ENCODE measurements at regions of chr1 and their contacts with region 1.

Region 1: GRCh38 chr1:211654838-211655787 is 20.3 kb downstream of the NEK2 start:
- DNase-seq: peak; percentile 86 to 94 (median 88)
- ATAC-seq: peak; percentile 98
- H3K4me3 ChIP-seq: no peak overlapping the region
- H3K27ac ChIP-seq: no peak overlapping the region
- H3K4me1 ChIP-seq: peaks cover 0 to 9% of the 10 kb centered on the region in 2 experiments; a peak in 3 of 5 replicates
- H3K27me3 ChIP-seq: no peaks in the 10 kb centered on the region
- CTCF ChIP-seq: peak; percentile 97 to 99 (median 99)
- EP300 ChIP-seq: peak; percentile 29; the same call in 1 of the 2 replicates
- POLR2A ChIP-seq: no peak
- RAD21 ChIP-seq: peak; percentile 100

Region 2: GRCh38 chr1:210584439-210585113 is 1070.5 kb before region 1 on chr1:
- CTCF ChIA-PET with region 1: no interaction called
- POLR2A ChIA-PET with region 1: no interaction called
- in situ Hi-C with region 1: loop called (anchors 25 kb)
- intact Hi-C with region 1: loop called (anchors 10 kb)
- DNase-seq: peak; percentile 67 to 84 (median 74)
- ATAC-seq: peak; percentile 99
- H3K4me3 ChIP-seq: no peak overlapping the region
- H3K27ac ChIP-seq: no peak overlapping the region
- H3K4me1 ChIP-seq: no peaks in the 10 kb centered on the region; a peak in 1 of 5 replicates
- H3K27me3 ChIP-seq: no peaks in the 10 kb centered on the region
- CTCF ChIP-seq: peak; percentile 73 to 84 (median 80)
- EP300 ChIP-seq: no peak
- POLR2A ChIP-seq: no peak
- RAD21 ChIP-seq: peak; percentile 86 to 89

Region 3: DNA sequence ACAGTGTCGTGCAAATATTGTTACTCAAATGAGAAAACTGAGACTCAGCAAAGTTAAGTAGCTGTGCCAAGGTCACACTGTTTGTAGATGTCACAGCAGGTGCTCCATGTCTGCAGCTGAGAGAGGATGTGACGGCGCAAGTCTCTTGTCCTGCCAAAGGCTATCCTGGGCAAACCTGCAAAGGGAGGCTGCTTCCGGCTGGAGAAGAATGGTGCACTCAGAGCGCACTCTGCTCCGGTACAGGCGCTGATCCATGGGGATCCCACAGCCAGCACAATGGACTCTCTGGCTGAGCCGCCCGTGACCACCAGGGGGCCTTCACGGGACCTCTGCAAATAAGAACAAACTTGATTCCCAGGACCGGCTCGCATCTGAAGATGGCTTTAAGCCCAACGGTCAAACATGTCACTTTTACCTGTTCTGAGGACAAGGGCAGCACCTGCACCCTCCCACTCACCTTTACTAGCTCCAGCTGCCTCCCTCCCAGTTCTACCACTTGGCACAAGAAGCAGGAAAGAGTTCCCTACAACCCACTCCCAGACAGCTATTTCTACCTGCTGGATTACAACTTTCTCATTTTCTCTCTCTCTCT is 185.1 kb before region 1 on chr1:
- CTCF ChIA-PET with region 1: interaction called, 15 read pairs
- POLR2A ChIA-PET with region 1: no interaction called
- in situ Hi-C with region 1: loop called (anchors 5 kb)
- intact Hi-C with region 1: loop called (anchors 1 kb)
- DNase-seq: peak; percentile 75 to 88 (median 78)
- ATAC-seq: peak; percentile 99
- H3K4me3 ChIP-seq: no peak overlapping the region
- H3K27ac ChIP-seq: no peak overlapping the region
- H3K4me1 ChIP-seq: peaks cover 0 to 5% of the 10 kb centered on the region in 2 experiments; a peak in 2 of 5 replicates
- H3K27me3 ChIP-seq: no peaks in the 10 kb centered on the region; a peak in 1 of 5 replicates
- CTCF ChIP-seq: peak; percentile 89 to 97 (median 92)
- EP300 ChIP-seq: no peak
- POLR2A ChIP-seq: no peak
- RAD21 ChIP-seq: peak; percentile 44 to 80; a peak in 3 of 4 replicates

Region 4: DNA sequence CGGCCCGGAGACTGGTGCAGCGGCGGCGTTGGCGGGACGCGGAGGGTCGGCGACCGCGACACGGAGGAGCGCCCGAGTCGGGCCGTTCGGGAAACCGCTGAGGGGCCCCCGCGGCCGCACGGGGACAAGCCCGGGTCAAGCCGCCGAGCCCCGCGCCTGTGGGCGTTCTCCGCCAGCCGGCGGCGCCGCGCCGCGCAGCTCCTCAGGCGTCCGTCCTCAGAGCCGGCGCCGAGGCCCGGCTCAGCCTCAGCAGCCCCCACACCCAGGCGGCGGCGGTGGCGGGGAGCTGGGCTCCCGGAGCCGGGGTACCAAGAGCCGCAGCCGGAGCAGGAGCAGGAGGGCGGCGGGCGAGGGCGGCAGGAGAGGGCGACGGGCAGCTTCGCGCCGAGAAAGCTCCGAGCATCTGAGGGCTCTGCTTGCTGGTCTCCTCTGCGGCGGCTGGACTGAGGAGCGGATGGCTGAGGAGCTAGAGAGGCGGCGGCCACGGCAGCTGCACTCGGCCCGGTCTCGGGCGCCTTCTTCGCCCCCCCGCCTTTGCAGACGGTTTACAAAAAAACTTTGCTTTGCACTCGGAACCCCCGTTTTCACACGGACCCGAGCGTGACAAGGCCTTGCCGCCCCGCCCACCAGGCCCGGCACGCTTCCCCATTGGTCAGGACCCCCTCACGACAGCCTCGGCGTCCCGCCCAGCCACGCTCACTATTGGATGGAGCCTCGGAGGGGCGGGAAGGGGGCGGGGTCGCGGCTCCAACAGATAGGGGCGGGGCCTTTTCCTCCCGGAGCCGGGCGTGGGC is 76.3 kb before region 1 on chr1 and contains the start of gene SLC30A1:
- CTCF ChIA-PET with region 1: interaction called, 36 read pairs
- POLR2A ChIA-PET with region 1: interaction called, 5 read pairs
- in situ Hi-C with region 1: no loop called
- intact Hi-C with region 1: loop called (anchors 1 kb)
- DNase-seq: peak; percentile 100
- ATAC-seq: peak; percentile 92
- H3K4me3 ChIP-seq: peak within 1 kb of the TSS; percentile 75
- H3K27ac ChIP-seq: peak within 1 kb of the TSS; percentile 84
- H3K4me1 ChIP-seq: peaks cover 26% of the 10 kb centered on the region in 2 experiments; a peak in 4 of 5 replicates
- H3K27me3 ChIP-seq: no peaks in the 10 kb centered on the region
- CTCF ChIP-seq: peak in 2 of 3 experiments; percentile 17 to 41; a peak in 1 of 6 replicates
- EP300 ChIP-seq: peak; percentile 23; the same call in 1 of the 2 replicates
- POLR2A ChIP-seq: peak; percentile 82
- RAD21 ChIP-seq: peak; percentile 17 to 31; a peak in 2 of 4 replicates
- polyA plus RNA-seq, gene SLC30A1: 4.1 to 4.2 TPM

Region 5: DNA sequence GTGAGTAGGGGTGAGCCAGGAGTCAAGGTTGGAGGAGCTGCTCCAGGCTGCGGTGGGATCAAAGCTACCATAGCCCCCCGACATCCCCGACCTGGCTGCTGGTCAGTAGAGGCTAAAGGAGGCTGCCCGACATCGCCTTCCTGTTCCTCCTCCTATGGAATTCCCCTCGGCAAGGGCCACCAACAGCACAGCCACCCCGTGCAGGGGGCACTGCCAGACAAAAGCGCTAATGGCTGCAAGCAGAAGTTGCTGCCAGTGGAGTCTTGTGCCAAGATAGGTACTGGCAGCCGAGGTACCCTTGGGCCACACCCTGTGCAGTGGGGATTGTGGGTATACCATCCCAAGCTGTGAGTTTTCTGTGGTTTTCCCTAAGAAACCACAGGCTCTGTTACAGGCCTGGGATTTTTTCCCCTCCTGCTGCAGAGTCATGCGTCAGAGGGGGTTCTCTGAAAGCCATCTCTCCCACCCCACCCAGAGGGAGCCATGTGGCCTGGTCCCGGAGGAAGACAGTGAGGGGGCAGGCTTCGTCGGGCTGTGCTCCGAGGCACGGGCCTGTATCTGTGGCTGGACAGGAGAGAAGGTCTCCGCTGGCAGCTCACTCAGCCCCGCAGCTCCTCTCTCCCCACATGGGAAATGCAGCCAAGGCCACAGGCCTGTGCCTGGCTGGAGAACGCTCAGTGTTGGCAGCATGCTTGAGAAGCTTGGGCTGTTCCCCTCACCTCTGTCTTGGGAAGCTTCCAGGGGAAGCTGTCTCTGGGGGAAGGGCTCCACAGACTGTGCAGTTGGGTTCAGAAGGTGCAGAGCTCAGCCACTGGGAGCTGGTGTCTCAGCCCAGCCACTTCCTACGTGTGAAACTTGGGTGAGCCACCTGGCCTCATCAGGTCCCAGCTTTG is 22.2 kb before region 1 on chr1:
- CTCF ChIA-PET with region 1: no interaction called
- POLR2A ChIA-PET with region 1: interaction called, 4 read pairs
- in situ Hi-C with region 1: no loop called
- intact Hi-C with region 1: loop called (anchors 1 kb)
- DNase-seq: no peak
- ATAC-seq: peak; percentile 6
- H3K4me3 ChIP-seq: no peak overlapping the region
- H3K27ac ChIP-seq: peak overlapping the region; percentile 54; the same call in 2 of the 3 replicates
- H3K4me1 ChIP-seq: peaks cover 35 to 42% of the 10 kb centered on the region in 2 experiments
- H3K27me3 ChIP-seq: no peaks in the 10 kb centered on the region
- CTCF ChIP-seq: no peak
- EP300 ChIP-seq: no peak
- POLR2A ChIP-seq: no peak
- RAD21 ChIP-seq: no peak

Region 6: GRCh38 chr1:211684791-211685190 is 29.7 kb after region 1 on chr1:
- CTCF ChIA-PET with region 1: no interaction called
- POLR2A ChIA-PET with region 1: no interaction called
- in situ Hi-C with region 1: no loop called
- intact Hi-C with region 1: no loop called
- DNase-seq: no peak
- ATAC-seq: no peak
- H3K4me3 ChIP-seq: no peak overlapping the region
- H3K27ac ChIP-seq: no peak overlapping the region
- H3K4me1 ChIP-seq: peaks cover 0 to 3% of the 10 kb centered on the region in 2 experiments; a peak in 2 of 5 replicates
- H3K27me3 ChIP-seq: peaks cover 7 to 27% of the 10 kb centered on the region in 2 experiments; a peak in 3 of 5 replicates
- CTCF ChIP-seq: no peak
- EP300 ChIP-seq: no peak
- POLR2A ChIP-seq: no peak
- RAD21 ChIP-seq: no peak